HCT116 (cell line): ENCODE measurements at regions of chr5 and their contacts with region 1.

Region 1: GRCh38 chr5:176388444-176389134 is at the starts of genes HIGD2A and NOP16:
- DNase-seq: peak; percentile 98
- ATAC-seq: peak; percentile 87
- H3K4me3 ChIP-seq: peak within 1 kb of the TSS; percentile 78 to 99
- H3K27ac ChIP-seq: peak within 1 kb of the TSS; percentile 94
- H3K4me1 ChIP-seq: peaks cover 11 to 22% of the 10 kb centered on the region in 2 experiments; a peak in 3 of 4 replicates
- H3K27me3 ChIP-seq: no peaks in the 10 kb centered on the region
- CTCF ChIP-seq: no peak
- POLR2A ChIP-seq: peak; percentile 80
- RAD21 ChIP-seq: no peak
- total RNA-seq, gene HIGD2A: 130 TPM
- total RNA-seq, gene NOP16: 67.1 TPM

Region 2: GRCh38 chr5:176361437-176362232 is 27.0 kb before region 1 on chr5 and contains the start of gene KIAA1191:
- CTCF ChIA-PET with region 1: no interaction called
- POLR2A ChIA-PET with region 1: no interaction called
- RAD21 ChIA-PET with region 1: no interaction called
- intact Hi-C with region 1: loop called (anchors 1 kb)
- DNase-seq: peak; percentile 77
- ATAC-seq: peak; percentile 97
- H3K4me3 ChIP-seq: peak within 1 kb of the TSS; percentile 97 to 100
- H3K27ac ChIP-seq: peak within 1 kb of the TSS; percentile 72
- H3K4me1 ChIP-seq: peaks cover 0 to 11% of the 10 kb centered on the region in 2 experiments; a peak in 2 of 4 replicates
- H3K27me3 ChIP-seq: no peaks in the 10 kb centered on the region
- CTCF ChIP-seq: peak in 1 of 3 experiments; percentile 36; a peak in 1 of 6 replicates
- POLR2A ChIP-seq: peak; percentile 96
- RAD21 ChIP-seq: peak; percentile 49
- total RNA-seq, gene KIAA1191: 99.0 TPM

Region 3: GRCh38 chr5:176537608-176538504 is 149.3 kb after region 1 on chr5:
- CTCF ChIA-PET with region 1: no interaction called
- POLR2A ChIA-PET with region 1: no interaction called
- RAD21 ChIA-PET with region 1: no interaction called
- intact Hi-C with region 1: loop called (anchors 2 kb)
- DNase-seq: peak; percentile 99
- ATAC-seq: peak; percentile 80
- H3K4me3 ChIP-seq: peak overlapping the region; percentile 79 to 99
- H3K27ac ChIP-seq: peak overlapping the region; percentile 89
- H3K4me1 ChIP-seq: peaks cover 27 to 47% of the 10 kb centered on the region in 2 experiments
- H3K27me3 ChIP-seq: no peaks in the 10 kb centered on the region
- CTCF ChIP-seq: no peak
- POLR2A ChIP-seq: peak; percentile 27
- RAD21 ChIP-seq: no peak